WTC11 (cell line): ENCODE measurements at regions of chr14 and their contacts with region 1.

Region 1: DNA sequence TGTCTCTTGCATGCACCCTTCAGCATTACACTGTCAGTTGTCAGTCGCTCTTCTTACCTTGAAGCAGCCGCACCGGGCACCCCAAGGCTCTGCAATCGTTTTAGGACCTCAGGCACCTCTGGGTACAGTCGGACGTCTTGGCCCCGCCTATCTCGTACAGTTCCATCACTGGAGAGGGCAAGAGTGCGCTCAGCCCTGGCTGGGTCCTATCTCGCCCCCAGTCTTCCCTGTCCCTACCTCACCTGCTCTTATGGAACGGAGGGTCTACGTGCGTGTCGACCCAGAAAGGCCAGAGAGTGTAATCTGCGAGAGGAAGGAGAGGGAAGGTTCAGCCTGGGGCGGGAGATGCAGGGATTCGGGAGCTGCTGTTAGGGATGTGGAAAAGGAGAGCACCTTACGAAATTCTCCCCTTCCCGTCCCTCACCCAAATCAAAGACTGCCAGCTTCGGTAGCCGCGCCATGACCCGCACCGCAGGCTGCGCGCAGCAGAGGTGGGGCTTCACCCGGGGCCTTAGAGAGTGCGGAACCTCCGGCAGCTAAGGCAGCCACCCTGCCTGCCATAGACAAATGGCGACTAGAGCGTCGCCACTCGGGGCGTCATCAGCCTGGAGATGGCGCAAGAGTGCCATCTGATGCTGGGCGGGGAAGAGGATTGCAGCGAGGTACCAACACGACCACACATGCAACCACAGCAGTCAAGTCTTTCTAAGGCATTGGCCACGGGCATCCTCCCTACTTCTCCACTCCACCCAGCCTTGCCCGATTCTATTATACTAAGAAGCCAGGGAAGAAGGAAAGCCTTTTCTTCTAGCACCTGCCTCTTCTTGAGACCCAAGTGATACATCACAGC is at the start of gene MDP1:
- DNase-seq: peak; percentile 85
- ATAC-seq: peak; percentile 71
- H3K4me3 Mint-ChIP-seq: peak within 1 kb of the TSS; percentile 96
- H3K27ac Mint-ChIP-seq: peak within 1 kb of the TSS; percentile 97
- H3K4me1 Mint-ChIP-seq: peaks cover 23% of the 10 kb centered on the region
- H3K27me3 Mint-ChIP-seq: no peaks in the 10 kb centered on the region; the same call in 1 of the 2 replicates
- CTCF ChIP-seq: no peak
- total RNA-seq, gene MDP1: 12.6 to 18.4 TPM (median 16.9 TPM) in 3 replicates

Region 2: DNA sequence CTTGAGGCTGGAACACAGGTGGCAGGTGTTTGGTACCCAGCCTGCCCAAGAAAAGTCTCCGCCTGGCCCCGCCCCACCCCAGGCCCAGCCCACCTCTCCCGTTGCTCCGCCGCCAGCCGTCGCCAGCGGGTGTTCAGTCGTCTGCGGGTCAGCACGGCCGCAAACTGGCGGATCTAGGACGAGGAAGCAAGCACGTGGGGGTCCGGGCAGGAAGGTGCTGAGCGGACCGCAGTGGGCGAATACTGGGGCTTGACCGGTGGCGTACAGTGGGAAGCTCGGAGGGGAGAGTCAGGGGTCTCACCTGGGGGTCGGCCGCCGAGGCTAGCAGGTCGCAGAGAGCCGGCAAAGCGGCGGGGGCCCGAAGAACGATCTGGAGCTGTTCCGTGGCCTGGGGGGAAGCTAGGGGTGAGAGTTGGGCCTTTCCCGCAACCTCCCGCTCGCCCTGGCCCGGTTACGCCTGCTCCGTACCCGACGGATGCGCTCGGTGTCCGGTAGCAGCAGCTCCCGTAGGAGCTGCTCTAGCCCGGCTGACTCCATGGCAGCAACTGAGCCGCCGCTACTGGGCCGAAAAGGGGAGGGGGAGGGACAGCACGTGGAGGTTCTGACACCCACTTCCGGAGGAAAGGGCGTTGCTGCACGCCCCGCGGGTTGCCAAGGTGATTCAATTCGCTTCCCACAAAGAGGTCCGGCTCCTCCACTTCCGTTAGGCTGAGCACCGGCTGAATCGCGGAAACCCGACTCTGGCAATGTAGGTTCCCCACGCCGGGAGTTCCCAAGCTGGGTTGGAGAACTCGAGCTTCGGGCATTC is 27.3 kb before region 1 on chr14 and contains the start of gene IPO4:
- CTCF ChIA-PET with region 1: interaction called, 4 read pairs
- POLR2A ChIA-PET with region 1: interaction called, 11 read pairs
- DNase-seq: peak; percentile 97
- ATAC-seq: peak; percentile 88
- H3K4me3 Mint-ChIP-seq: peak within 1 kb of the TSS; percentile 89
- H3K27ac Mint-ChIP-seq: peak within 1 kb of the TSS; percentile 76; the same call in 1 of the 2 replicates
- H3K4me1 Mint-ChIP-seq: peaks cover 16% of the 10 kb centered on the region
- H3K27me3 Mint-ChIP-seq: no peaks in the 10 kb centered on the region
- CTCF ChIP-seq: no peak
- total RNA-seq, gene IPO4: 87.6 to 128 TPM (median 91.2 TPM) in 3 replicates

Region 3: DNA sequence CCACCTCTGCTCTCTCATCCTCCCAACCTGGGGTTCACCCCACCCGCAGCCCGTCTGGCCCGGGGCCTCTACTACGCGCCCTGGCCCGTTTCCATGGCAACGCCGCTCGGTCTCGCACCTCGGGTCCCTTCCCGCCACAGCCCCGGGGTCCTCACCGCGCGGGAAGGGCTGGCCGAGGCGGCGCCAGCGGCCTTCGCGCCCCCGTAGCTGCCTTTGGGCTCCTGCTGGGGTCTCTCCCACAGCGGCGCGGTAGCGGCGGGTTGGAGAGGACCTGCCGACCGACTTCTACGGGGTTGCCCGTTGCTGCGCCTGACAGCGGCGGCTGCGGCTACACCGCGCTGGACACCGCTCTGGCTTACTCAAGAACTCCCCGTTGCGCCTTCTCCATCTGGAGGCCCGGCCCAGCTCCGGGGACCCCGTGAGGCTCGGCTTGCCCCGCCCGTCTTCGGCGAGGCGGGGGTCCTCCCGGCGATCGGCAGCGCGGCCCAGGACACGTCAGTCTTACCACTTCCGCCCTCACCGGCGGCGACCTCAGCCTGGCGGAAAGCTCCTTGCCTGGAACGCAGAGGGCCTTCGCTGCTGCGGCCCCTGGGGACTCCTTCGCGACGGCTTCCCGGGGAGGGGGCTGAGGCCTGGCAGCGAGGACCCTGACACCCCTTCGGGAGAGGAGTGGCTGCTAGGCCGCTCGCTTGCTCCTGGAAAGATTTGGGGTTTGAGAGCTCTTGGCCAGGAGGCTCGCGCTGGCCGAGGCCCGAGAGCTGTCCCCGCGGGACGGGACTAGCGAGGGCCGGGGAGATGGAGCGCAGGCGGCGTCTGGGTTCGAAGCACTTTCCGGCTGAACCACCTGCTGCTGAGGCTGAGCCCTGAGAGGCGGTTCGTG is 20.3 kb before region 1 on chr14 and contains the start of gene TM9SF1:
- CTCF ChIA-PET with region 1: interaction called, 10 read pairs
- POLR2A ChIA-PET with region 1: interaction called, 20 read pairs
- DNase-seq: peak; percentile 84
- ATAC-seq: peak; percentile 86
- H3K4me3 Mint-ChIP-seq: peak within 1 kb of the TSS; percentile 94
- H3K27ac Mint-ChIP-seq: peak within 1 kb of the TSS; percentile 97
- H3K4me1 Mint-ChIP-seq: peaks cover 23% of the 10 kb centered on the region
- H3K27me3 Mint-ChIP-seq: no peaks in the 10 kb centered on the region
- CTCF ChIP-seq: no peak
- total RNA-seq, gene TM9SF1: 27.9 to 29.2 TPM (median 28.4 TPM) in 3 replicates

Region 4: GRCh38 chr14:24241829-24242443 is 26.2 kb after region 1 on chr14:
- CTCF ChIA-PET with region 1: interaction called, 31 read pairs
- POLR2A ChIA-PET with region 1: interaction called, 21 read pairs
- DNase-seq: peak; percentile 95
- ATAC-seq: peak; percentile 85
- H3K4me3 Mint-ChIP-seq: peak overlapping the region; percentile 93
- H3K27ac Mint-ChIP-seq: peak overlapping the region; percentile 97
- H3K4me1 Mint-ChIP-seq: peaks cover 13% of the 10 kb centered on the region
- H3K27me3 Mint-ChIP-seq: peaks cover 12% of the 10 kb centered on the region
- CTCF ChIP-seq: no peak

Region 5: DNA sequence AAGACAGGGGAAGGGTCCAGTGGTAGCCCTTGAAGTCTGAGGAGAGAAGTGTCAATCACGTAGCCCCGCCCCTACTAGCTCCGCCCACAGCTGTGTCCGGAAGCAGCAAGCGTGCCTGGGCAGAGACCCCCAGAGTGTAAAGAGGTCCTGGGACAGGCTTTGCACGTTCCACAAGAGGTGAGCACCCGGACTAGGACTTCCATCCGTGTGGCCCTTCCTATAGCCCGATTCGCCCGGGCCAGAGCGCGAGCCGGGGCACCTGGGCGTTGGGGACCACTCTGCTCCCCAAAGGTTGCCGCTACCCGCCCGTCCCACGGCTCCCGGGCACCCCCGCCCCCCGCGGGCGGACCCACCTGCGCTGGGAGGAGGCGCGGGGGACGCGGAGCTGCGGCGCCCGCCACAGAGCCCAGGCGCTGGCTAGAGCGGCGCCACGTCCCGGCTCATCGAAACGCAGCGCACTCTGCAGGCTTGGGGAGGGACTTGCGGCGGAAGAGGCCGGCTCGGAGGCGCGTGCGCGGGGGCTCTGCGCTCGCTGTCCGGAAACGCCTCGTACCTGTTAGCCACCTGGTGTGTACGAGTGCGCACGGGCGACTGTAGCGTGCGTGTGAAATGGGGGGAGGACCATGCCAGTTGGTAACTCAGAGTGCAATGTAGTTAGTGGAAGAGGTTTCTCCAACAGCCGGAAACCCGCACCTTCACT is 55.6 kb after region 1 on chr14 and contains the start of gene RABGGTA:
- CTCF ChIA-PET with region 1: interaction called, 13 read pairs
- POLR2A ChIA-PET with region 1: interaction called, 4 read pairs
- DNase-seq: peak; percentile 95
- ATAC-seq: peak; percentile 94
- H3K4me3 Mint-ChIP-seq: peak within 1 kb of the TSS; percentile 72
- H3K27ac Mint-ChIP-seq: peak within 1 kb of the TSS; percentile 87
- H3K4me1 Mint-ChIP-seq: peaks cover 16% of the 10 kb centered on the region
- H3K27me3 Mint-ChIP-seq: no peaks in the 10 kb centered on the region
- CTCF ChIP-seq: 0 out of 2 replicates have a peak, but pooled peaks have one; percentile 15
- total RNA-seq, gene RABGGTA: 22.3 to 28.1 TPM (median 27.1 TPM) in 3 replicates

Region 6: GRCh38 chr14:24299255-24300195 is 83.8 kb after region 1 on chr14 and contains the starts of genes DHRS1 and NOP9:
- CTCF ChIA-PET with region 1: interaction called, 14 read pairs
- POLR2A ChIA-PET with region 1: interaction called, 3 read pairs
- DNase-seq: peak; percentile 94
- ATAC-seq: peak; percentile 83
- H3K4me3 Mint-ChIP-seq: peak within 1 kb of the TSS; percentile 91
- H3K27ac Mint-ChIP-seq: peak within 1 kb of the TSS; percentile 89
- H3K4me1 Mint-ChIP-seq: peaks cover 19% of the 10 kb centered on the region
- H3K27me3 Mint-ChIP-seq: 0 out of 2 replicates have a peak, but pooled peaks cover 3% of the 10 kb centered on the region
- CTCF ChIP-seq: no peak
- total RNA-seq, gene DHRS1: 13.9 to 16.7 TPM (median 15.4 TPM) in 3 replicates
- total RNA-seq, gene NOP9: 34.3 to 44.4 TPM (median 35.0 TPM) in 3 replicates